Activated CD4-positive, alpha-beta T cell treated with anti-CD3 and anti-CD28 coated beads, Interleukin-2, amount 10 ng/mL, durations not matched to agents 24 days and 14 days (primary cell): ENCODE measurements at regions of chr19 and their contacts with region 1.

Region 1: GRCh38 chr19:29610563-29611271 is 4.6 kb downstream of the POP4 start:
- DNase-seq: peak; percentile 96
- H3K4me3 Mint-ChIP-seq: no peak overlapping the region
- H3K27ac Mint-ChIP-seq: peak overlapping the region; percentile 77
- H3K4me1 Mint-ChIP-seq: peaks cover 22% of the 10 kb centered on the region
- H3K27me3 Mint-ChIP-seq: peaks cover 2% of the 10 kb centered on the region

Region 2: DNA sequence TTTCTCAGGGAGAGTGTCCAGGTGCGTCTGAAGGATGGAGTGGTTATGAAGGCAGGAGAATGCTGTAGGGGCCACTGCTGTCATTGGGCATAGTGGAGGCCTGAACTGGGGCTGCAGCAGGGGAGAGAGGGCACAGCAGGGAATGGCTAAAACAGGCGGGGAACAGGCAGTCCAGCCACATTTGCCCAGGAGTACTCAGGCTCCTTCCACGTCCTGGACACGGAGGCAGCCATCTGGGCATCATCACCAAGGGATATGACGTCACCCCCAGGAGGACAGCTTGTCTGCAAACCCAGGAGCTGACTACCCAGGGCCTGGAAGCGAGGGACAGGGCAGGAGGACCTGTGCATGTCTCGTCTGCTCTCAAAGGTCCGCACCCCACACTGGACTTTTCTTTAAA is 62.7 kb before region 1 on chr19:
- intact Hi-C with region 1: no loop called
- DNase-seq: no peak
- H3K4me3 Mint-ChIP-seq: no peak overlapping the region
- H3K27ac Mint-ChIP-seq: no peak overlapping the region
- H3K4me1 Mint-ChIP-seq: no peaks in the 10 kb centered on the region
- H3K27me3 Mint-ChIP-seq: peaks cover 9% of the 10 kb centered on the region

Region 3: GRCh38 chr19:29587518-29587986 is 23.2 kb before region 1 on chr19:
- intact Hi-C with region 1: loop called (anchors 1 kb)
- DNase-seq: peak; percentile 93
- H3K4me3 Mint-ChIP-seq: peak overlapping the region; percentile 39
- H3K27ac Mint-ChIP-seq: peak overlapping the region; percentile 78
- H3K4me1 Mint-ChIP-seq: peaks cover 29% of the 10 kb centered on the region
- H3K27me3 Mint-ChIP-seq: peaks cover 21% of the 10 kb centered on the region

Region 4: GRCh38 chr19:29694669-29695627 is 84.2 kb after region 1 on chr19:
- intact Hi-C with region 1: loop called (anchors 1 kb)
- DNase-seq: peak; percentile 95
- H3K4me3 Mint-ChIP-seq: no peak overlapping the region
- H3K27ac Mint-ChIP-seq: peak overlapping the region; percentile 34
- H3K4me1 Mint-ChIP-seq: peaks cover 17% of the 10 kb centered on the region
- H3K27me3 Mint-ChIP-seq: no peaks in the 10 kb centered on the region

Region 5: GRCh38 chr19:29844891-29845572 is 234.3 kb after region 1 on chr19:
- intact Hi-C with region 1: loop called (anchors 10 kb)
- DNase-seq: peak; percentile 98
- H3K4me3 Mint-ChIP-seq: peak overlapping the region; percentile 87
- H3K27ac Mint-ChIP-seq: peak overlapping the region; percentile 86
- H3K4me1 Mint-ChIP-seq: peaks cover 26% of the 10 kb centered on the region
- H3K27me3 Mint-ChIP-seq: no peaks in the 10 kb centered on the region